H1 (cell line): ENCODE measurements at regions of chr18 and their contacts with region 1.

Region 1: DNA sequence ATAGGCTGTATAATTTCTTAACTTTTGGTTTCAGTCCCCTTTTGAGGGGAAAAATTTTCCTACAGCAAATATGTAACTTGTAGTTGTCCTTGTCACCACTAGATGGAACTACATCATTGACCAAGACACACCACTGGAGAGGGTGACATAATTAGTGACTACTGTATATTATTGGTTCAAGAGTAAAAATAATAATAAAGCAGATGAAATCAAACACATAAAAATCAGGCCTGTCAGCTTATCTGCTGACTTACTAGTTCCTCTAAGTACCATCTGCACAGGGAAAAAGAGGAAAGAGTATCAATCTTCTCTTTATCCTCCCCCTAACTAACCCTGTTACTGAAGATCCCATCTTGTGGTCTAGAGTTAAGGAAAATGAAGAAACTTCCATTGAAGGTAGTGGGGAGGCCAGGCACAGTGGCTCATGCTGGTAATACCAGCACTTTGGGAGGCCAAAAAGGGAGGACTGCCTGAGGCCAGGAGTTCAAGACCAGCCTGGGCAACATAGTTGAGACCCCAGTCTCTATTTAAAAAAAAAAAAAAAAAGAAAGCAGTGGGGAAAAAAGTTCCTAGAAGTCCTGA is 29.6 kb upstream of the ENOSF1 start:
- DNase-seq: no peak
- H3K4me3 ChIP-seq: no peak overlapping the region
- H3K27ac ChIP-seq: no peak overlapping the region
- H3K4me1 ChIP-seq: no peaks in the 10 kb centered on the region
- H3K27me3 ChIP-seq: no peaks in the 10 kb centered on the region
- CTCF ChIP-seq: peak in 2 of 3 experiments; percentile 41 to 54; a peak in 2 of 4 replicates
- EP300 ChIP-seq: no peak
- POLR2A ChIP-seq: no peak
- RAD21 ChIP-seq: peak; percentile 77 to 78

Region 2: DNA sequence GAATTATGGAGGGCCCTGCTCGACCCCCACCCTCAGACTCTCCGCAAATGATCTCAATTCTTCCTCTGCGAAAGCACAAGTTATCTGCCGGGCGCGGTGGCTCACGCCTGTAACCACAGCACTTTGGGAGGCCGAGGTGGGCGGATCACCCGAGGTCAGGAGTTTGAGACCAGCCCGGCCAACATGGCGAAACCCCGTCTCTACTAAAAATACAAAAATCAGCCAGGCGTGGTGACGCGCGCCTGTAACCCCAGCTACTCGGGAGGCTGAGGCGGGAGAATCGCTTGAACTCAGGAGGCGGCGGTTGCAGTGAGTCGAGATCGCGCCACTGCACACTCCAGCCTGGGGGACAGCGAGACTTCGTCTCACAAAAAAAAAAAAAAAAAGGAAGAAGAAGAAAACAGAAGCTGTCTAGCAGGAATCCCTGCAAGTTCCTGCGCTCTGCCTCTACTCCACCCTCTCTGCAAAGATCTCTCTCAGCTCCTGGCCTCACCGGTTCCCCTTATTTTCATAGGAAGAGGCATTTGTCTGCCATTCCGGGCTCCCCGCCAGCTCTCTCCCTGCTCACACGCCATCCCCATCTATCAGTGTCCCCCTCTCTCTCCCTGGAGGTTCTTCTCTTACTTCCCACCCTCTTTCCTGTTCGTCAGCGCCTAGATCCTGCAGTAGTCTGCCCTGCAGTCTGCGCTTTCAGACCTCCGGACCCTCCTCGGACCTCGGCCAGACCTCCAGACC is 228.0 kb before region 1 on chr18:
- CTCF ChIA-PET with region 1: no interaction called
- POLR2A ChIA-PET with region 1: no interaction called
- DNase-seq: no peak
- H3K4me3 ChIP-seq: no peak overlapping the region
- H3K27ac ChIP-seq: no peak overlapping the region
- H3K4me1 ChIP-seq: peaks cover 0 to 9% (median 4%) of the 10 kb centered on the region in 4 experiments; a peak in 4 of 7 replicates
- H3K27me3 ChIP-seq: no peaks in the 10 kb centered on the region
- CTCF ChIP-seq: no peak
- EP300 ChIP-seq: no peak
- POLR2A ChIP-seq: no peak
- RAD21 ChIP-seq: no peak

Region 3: GRCh38 chr18:754666-755065 is 12.6 kb after region 1 on chr18:
- CTCF ChIA-PET with region 1: interaction called, 21 read pairs
- POLR2A ChIA-PET with region 1: no interaction called
- DNase-seq: no peak
- H3K4me3 ChIP-seq: no peak overlapping the region
- H3K27ac ChIP-seq: no peak overlapping the region
- H3K4me1 ChIP-seq: no peaks in the 10 kb centered on the region
- H3K27me3 ChIP-seq: no peaks in the 10 kb centered on the region
- CTCF ChIP-seq: no peak
- EP300 ChIP-seq: no peak
- POLR2A ChIP-seq: no peak
- RAD21 ChIP-seq: no peak

Region 4: DNA sequence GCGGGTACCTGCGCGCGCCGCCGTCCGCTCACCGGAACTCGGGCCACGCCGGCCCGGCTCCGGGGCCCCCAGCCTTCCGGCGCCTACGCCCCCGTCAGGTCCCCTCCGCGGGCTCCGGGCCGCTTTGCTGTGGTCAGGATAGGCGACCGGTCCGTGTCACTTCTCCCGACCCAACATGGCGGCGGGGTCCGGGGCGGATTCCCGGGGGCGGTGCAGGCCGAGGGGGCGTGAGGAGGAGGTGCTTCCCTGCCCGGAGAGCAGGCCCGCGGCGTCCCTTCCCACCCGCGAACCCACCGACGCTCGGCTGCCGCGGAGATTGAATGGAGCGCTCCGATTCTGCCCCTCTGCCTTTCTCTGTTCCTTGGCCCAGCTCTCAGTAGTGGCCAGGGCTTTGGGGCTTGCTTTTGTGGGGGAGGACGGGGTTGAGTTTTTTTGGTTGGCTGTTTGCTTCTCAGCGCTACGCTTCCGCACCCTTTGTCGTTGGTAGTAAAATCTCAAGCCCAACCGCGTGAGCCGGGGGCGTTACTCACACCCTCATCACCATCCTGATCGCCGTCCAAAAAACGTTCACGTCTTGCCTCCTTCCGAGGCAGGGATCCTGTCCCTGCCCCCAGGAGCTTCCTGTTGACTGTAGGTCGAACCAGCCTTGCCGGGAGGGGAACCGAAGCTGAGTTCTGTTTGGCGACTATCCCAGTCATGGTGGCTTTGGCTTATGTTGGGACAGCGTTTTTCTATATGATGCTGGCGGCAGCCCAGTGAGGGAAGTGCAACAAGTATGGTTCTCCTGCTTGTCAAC is 70.6 kb after region 1 on chr18:
- CTCF ChIA-PET with region 1: interaction called, 32 read pairs
- POLR2A ChIA-PET with region 1: no interaction called
- DNase-seq: peak in 1 of 2 experiments; percentile 90
- H3K4me3 ChIP-seq: peak overlapping the region; percentile 92 to 93 (median 92)
- H3K27ac ChIP-seq: peak overlapping the region; percentile 94
- H3K4me1 ChIP-seq: peaks cover 0 to 4% (median 2%) of the 10 kb centered on the region in 4 experiments; a peak in 2 of 7 replicates
- H3K27me3 ChIP-seq: no peaks in the 10 kb centered on the region
- CTCF ChIP-seq: no peak
- EP300 ChIP-seq: no peak
- POLR2A ChIP-seq: peak in 1 of 2 experiments; percentile 75; a peak in 2 of 3 replicates
- RAD21 ChIP-seq: no peak